Activated CD4-positive, alpha-beta T cell treated with anti-CD3 and anti-CD28 coated beads for 36 hours (primary cell): ENCODE measurements at regions of chr12 and their contacts with region 1.

Region 1: GRCh38 chr12:94269316-94269999 is 121.1 kb downstream of the PLXNC1 start:
- DNase-seq: no peak
- ATAC-seq: peak; percentile 86
- H3K4me3 Mint-ChIP-seq: peak overlapping the region; percentile 24
- H3K27ac Mint-ChIP-seq: peak overlapping the region; percentile 63
- H3K4me1 Mint-ChIP-seq: peaks cover 63% of the 10 kb centered on the region
- H3K27me3 Mint-ChIP-seq: no peaks in the 10 kb centered on the region

Region 2: DNA sequence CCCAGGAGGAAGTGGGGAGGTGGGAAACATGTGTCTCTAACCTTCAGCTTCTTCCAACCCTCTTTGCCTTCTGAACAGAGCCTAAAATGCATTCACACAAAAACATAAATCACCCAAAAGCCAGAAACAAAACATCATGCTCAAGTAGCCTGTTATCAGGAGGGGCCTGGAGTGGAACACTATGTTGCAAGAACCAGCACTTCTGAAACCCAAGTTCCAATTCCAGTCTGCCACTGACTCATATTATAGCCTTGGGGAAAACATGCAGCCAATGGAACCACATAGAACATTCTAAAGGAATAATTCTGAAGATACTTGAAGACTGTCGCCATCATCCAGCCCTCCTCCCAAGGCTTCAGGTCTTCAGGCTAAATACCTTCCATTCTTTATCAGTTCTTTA is 290.9 kb before region 1 on chr12:
- CTCF ChIA-PET with region 1: no interaction called
- POLR2A ChIA-PET with region 1: no interaction called
- intact Hi-C with region 1: no loop called
- DNase-seq: no peak
- ATAC-seq: no peak
- H3K4me3 Mint-ChIP-seq: no peak overlapping the region
- H3K27ac Mint-ChIP-seq: no peak overlapping the region
- H3K4me1 Mint-ChIP-seq: peaks cover 16% of the 10 kb centered on the region
- H3K27me3 Mint-ChIP-seq: peaks cover 8% of the 10 kb centered on the region

Region 3: GRCh38 chr12:94326727-94327126 is 57.3 kb after region 1 on chr12:
- CTCF ChIA-PET with region 1: no interaction called
- POLR2A ChIA-PET with region 1: no interaction called
- intact Hi-C with region 1: loop called (anchors 2 to 5 kb)
- DNase-seq: no peak
- ATAC-seq: peak; percentile 86
- H3K4me3 Mint-ChIP-seq: no peak overlapping the region
- H3K27ac Mint-ChIP-seq: no peak overlapping the region
- H3K4me1 Mint-ChIP-seq: peaks cover 19% of the 10 kb centered on the region
- H3K27me3 Mint-ChIP-seq: no peaks in the 10 kb centered on the region